ENCODE measurements at regions of chr10 and their contacts with region 1.

Region 1: GRCh38 chr10:117174439-117175214 is 22.7 kb upstream of the KCNK18 start:
- DNase-seq: no peak
- H3K4me3 ChIP-seq: peak overlapping the region; percentile 43 to 45
- H3K27ac ChIP-seq: no peak overlapping the region
- H3K4me1 ChIP-seq: peaks cover 11% of the 10 kb centered on the region
- H3K27me3 ChIP-seq: no peaks in the 10 kb centered on the region
- CTCF ChIP-seq: peak; percentile 51 to 89 (median 59)
- POLR2A ChIP-seq: no peak

Region 2: DNA sequence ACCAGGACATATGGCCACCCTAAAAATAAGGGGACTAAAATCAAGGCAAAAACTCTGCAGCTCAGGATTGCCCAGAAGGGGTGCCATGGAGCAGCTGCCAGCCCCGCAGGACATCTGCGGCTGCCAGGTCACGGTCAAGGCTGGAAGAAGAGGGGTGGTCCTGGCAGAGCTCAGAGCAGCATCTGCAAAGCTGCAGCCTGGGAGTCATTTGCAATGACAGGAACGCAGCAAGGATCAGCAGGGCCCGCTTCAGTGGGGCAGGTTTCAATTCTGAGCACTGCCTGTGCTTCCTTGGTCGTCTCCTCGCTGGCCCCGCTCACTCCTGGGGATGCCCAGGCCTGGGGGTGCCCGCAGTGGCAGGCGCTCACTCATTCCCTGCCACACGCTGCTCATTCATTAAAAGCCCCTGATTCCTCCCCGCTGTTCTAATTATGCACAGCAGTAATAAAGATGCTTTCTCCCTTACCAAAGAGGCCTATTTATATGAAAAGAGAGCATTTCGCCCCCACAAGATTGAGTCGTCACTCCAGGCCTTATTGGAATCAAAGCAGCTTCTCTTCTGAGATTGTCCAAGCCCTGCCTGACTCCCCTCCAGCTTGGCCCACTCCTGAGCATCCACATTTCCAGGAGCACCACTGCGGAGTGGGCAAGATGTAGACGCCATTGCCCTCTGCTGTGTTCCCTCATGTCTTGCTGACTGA is 436.9 kb before region 1 on chr10:
- intact Hi-C with region 1: no loop called
- DNase-seq: no peak
- H3K4me3 ChIP-seq: no peak overlapping the region
- H3K27ac ChIP-seq: no peak overlapping the region
- H3K4me1 ChIP-seq: peaks cover 19% of the 10 kb centered on the region
- H3K27me3 ChIP-seq: no peaks in the 10 kb centered on the region
- CTCF ChIP-seq: no peak
- POLR2A ChIP-seq: no peak

Region 3: DNA sequence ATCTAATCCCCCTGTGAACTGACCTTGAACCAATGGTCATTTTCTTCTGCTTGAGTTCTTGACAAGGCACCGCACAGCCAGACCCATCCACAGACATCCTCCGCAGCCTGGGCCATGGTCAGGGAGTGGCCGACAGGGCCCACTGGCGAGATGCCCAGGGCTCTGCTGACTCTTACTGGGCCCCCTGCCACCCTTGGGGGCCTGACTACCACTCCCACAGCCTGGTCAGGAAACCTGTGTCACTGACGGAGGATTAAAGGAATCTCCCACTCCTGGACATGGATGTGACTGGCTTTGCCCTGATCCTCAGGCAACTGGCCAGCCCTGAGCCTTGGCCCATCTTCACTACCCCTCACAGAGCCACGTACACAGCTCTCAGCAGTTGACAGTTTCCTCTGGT is 375.8 kb before region 1 on chr10:
- intact Hi-C with region 1: loop called (anchors 2 kb)
- DNase-seq: no peak
- H3K4me3 ChIP-seq: no peak overlapping the region
- H3K27ac ChIP-seq: no peak overlapping the region
- H3K4me1 ChIP-seq: no peaks in the 10 kb centered on the region
- H3K27me3 ChIP-seq: no peaks in the 10 kb centered on the region
- CTCF ChIP-seq: no peak
- POLR2A ChIP-seq: no peak

Region 4: DNA sequence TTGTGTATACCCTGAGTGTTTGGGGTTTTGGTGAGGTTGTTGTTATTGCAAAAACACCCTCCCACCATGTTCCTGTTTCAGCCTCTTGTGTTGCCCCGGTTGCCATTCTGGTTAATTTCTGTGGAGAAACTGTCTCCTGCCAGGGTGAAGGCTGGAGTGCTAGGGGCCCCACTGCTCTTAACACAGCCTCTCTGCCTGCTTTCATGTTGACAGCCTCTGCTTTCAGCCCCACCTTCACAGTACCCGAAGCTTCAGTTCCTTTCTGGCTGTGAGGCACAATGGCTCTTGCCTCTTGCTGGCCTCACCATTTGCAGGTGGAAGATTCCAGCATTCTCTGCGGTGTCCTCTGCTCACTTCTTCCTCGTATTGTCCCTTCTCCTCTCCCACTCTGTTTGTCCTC is 85.5 kb after region 1 on chr10:
- intact Hi-C with region 1: no loop called
- DNase-seq: peak in 1 of 2 donors; percentile 62
- H3K4me3 ChIP-seq: no peak overlapping the region
- H3K27ac ChIP-seq: peak overlapping the region; percentile 53
- H3K4me1 ChIP-seq: no peaks in the 10 kb centered on the region
- H3K27me3 ChIP-seq: no peaks in the 10 kb centered on the region
- CTCF ChIP-seq: no peak
- POLR2A ChIP-seq: no peak

Region 5: DNA sequence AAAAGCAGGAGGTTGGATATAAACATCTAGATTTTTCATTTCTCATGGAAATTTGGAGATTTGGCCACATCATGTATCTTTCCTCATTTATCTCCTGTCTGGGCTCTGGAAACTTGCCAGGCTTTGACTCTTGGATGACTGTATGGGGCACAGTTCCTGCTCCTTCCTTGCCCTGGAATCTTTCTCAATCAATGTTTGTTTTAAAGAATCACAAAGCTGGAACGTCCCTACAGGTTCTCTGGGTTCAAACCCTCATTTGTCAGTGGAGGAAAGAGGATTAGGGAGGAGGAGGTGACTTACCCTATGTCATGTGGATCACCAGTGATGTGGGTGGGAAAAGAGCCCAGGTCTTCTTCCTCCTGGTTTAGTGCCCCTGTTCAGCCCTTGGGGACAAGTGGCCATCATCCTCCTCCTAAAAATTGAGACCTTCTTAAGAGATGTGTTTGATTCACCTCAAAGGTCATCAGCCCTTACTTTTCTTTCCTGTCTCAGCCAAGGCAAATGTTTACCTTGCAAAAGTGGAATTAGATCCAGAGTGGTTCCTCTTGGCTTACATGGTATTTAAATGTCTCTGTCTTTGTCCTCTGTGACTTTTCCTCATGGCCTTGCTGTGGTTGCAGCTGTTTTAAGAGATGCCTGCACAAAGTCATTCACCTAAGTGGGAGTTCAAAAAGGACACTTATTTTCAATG is 239.4 kb after region 1 on chr10:
- intact Hi-C with region 1: no loop called
- DNase-seq: no peak
- H3K4me3 ChIP-seq: no peak overlapping the region
- H3K27ac ChIP-seq: no peak overlapping the region
- H3K4me1 ChIP-seq: no peaks in the 10 kb centered on the region
- H3K27me3 ChIP-seq: no peaks in the 10 kb centered on the region
- CTCF ChIP-seq: no peak
- POLR2A ChIP-seq: no peak

Region 6: GRCh38 chr10:117449636-117450035 is 275.0 kb after region 1 on chr10:
- intact Hi-C with region 1: no loop called
- DNase-seq: no peak
- H3K4me3 ChIP-seq: no peak overlapping the region
- H3K27ac ChIP-seq: peak overlapping the region; percentile 60
- H3K4me1 ChIP-seq: peaks cover 9% of the 10 kb centered on the region
- H3K27me3 ChIP-seq: no peaks in the 10 kb centered on the region
- CTCF ChIP-seq: no peak
- POLR2A ChIP-seq: no peak